ENCODE measurements at regions of chr7 and their contacts with region 1.

Region 1: DNA sequence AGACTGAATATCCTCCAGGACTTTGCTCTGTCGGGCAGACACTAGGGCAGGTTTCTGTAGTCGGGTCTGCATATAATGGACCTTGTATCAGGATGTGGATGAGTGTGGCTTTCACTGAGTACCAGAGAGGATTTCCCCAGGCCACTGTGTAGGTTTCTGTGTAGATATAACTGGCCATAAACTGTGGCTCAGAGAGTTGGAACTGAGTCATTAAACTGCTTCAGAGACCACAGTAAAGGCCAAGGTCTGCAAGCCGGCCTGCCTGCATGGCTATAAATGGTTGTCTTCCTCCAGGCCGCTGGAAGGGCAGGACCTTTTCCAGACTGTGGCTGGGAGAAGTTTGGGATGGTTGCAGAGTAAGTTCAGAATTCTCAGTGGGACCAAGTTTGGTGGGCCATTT is 16.9 kb downstream of the ZNF92 start:
- DNase-seq: no peak
- ATAC-seq: no peak
- H3K4me3 ChIP-seq: no peak overlapping the region
- H3K4me3 Mint-ChIP-seq: no peak overlapping the region
- H3K27ac ChIP-seq: no peak overlapping the region
- H3K27ac Mint-ChIP-seq: no peak overlapping the region
- H3K4me1 ChIP-seq: peaks cover 6% of the 10 kb centered on the region
- H3K4me1 Mint-ChIP-seq: peaks cover 22% of the 10 kb centered on the region
- H3K27me3 ChIP-seq: no peaks in the 10 kb centered on the region
- H3K27me3 Mint-ChIP-seq: no peaks in the 10 kb centered on the region
- CTCF ChIP-seq: no peak

Region 2: DNA sequence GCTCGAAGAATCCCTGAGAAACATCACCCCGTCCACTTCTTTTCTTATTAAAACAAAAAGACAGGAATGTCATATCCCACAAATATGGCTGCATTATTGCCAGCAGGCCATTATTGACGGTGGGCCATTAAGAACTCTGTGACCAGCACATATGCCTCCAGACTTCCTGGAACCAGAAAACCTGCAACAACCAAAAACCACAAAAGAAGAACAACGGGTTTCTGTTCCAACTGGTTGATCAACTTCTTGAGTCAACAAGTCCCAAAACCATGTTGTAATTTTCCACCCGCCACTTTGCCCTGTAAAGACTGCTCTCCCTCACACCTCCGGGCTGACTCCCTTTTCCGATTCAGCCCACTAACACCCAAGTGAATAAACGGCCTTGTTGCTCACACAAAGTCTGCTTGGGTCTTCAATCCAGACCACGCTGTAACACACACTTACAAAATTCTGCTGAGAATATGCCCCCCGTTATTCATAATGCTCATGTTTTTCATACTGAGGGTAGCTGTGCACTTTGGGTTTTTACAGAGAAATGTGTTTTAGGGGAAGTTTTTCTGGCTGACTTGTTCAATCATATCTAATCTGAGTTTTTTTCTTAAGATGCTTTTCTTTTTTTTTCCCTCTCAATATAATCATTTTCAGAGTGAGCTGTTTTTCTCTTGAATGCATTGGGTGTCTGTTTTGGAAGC is 703.9 kb before region 1 on chr7:
- CTCF ChIA-PET with region 1: no interaction called
- POLR2A ChIA-PET with region 1: no interaction called
- intact Hi-C with region 1: loop called in 1 of 2 experiments (anchors 5 kb)
- DNase-seq: peak in 1 of 14 experiments; percentile 25
- ATAC-seq: no peak
- H3K4me3 ChIP-seq: no peak overlapping the region
- H3K4me3 Mint-ChIP-seq: no peak overlapping the region
- H3K27ac ChIP-seq: no peak overlapping the region
- H3K27ac Mint-ChIP-seq: peak overlapping the region; percentile 43
- H3K4me1 ChIP-seq: peaks cover 27% of the 10 kb centered on the region
- H3K4me1 Mint-ChIP-seq: peaks cover 38% of the 10 kb centered on the region
- H3K27me3 ChIP-seq: no peaks in the 10 kb centered on the region
- H3K27me3 Mint-ChIP-seq: no peaks in the 10 kb centered on the region
- CTCF ChIP-seq: no peak

Region 3: GRCh38 chr7:65251851-65252620 is 138.6 kb before region 1 on chr7:
- CTCF ChIA-PET with region 1: no interaction called
- POLR2A ChIA-PET with region 1: no interaction called
- intact Hi-C with region 1: no loop called
- DNase-seq: peak in 7 of 14 experiments; percentile 5 to 70 (median 31)
- ATAC-seq: peak; percentile 62
- H3K4me3 ChIP-seq: peak overlapping the region; percentile 72
- H3K4me3 Mint-ChIP-seq: peak overlapping the region; percentile 84
- H3K27ac ChIP-seq: no peak overlapping the region
- H3K27ac Mint-ChIP-seq: no peak overlapping the region
- H3K4me1 ChIP-seq: peaks cover 5% of the 10 kb centered on the region
- H3K4me1 Mint-ChIP-seq: no peaks in the 10 kb centered on the region
- H3K27me3 ChIP-seq: peaks cover 6 to 8% of the 10 kb centered on the region in 2 experiments
- H3K27me3 Mint-ChIP-seq: peaks cover 31% of the 10 kb centered on the region
- CTCF ChIP-seq: no peak

Region 4: GRCh38 chr7:65509368-65510186 is 119.0 kb after region 1 on chr7:
- CTCF ChIA-PET with region 1: no interaction called
- POLR2A ChIA-PET with region 1: no interaction called
- intact Hi-C with region 1: no loop called
- DNase-seq: peak in 5 of 14 experiments; percentile 0 to 37 (median 10)
- ATAC-seq: no peak
- H3K4me3 ChIP-seq: peak overlapping the region; percentile 52
- H3K4me3 Mint-ChIP-seq: peak overlapping the region; percentile 56
- H3K27ac ChIP-seq: no peak overlapping the region
- H3K27ac Mint-ChIP-seq: no peak overlapping the region
- H3K4me1 ChIP-seq: peaks cover 9% of the 10 kb centered on the region
- H3K4me1 Mint-ChIP-seq: peaks cover 5% of the 10 kb centered on the region
- H3K27me3 ChIP-seq: peaks cover 12 to 19% of the 10 kb centered on the region in 2 experiments
- H3K27me3 Mint-ChIP-seq: peaks cover 22% of the 10 kb centered on the region
- CTCF ChIP-seq: no peak

Region 5: GRCh38 chr7:66033471-66034385 is 643.1 kb after region 1 on chr7:
- CTCF ChIA-PET with region 1: no interaction called
- POLR2A ChIA-PET with region 1: no interaction called
- intact Hi-C with region 1: no loop called
- DNase-seq: peak in 1 of 14 experiments; percentile 27
- ATAC-seq: no peak
- H3K4me3 ChIP-seq: no peak overlapping the region
- H3K4me3 Mint-ChIP-seq: no peak overlapping the region
- H3K27ac ChIP-seq: no peak overlapping the region
- H3K27ac Mint-ChIP-seq: no peak overlapping the region
- H3K4me1 ChIP-seq: no peaks in the 10 kb centered on the region
- H3K4me1 Mint-ChIP-seq: no peaks in the 10 kb centered on the region
- H3K27me3 ChIP-seq: no peaks in the 10 kb centered on the region
- H3K27me3 Mint-ChIP-seq: no peaks in the 10 kb centered on the region
- CTCF ChIP-seq: no peak